Esophagus muscularis mucosa (tissue), 4 donors: ENCODE measurements at regions of chr19 and their contacts with region 1.

Region 1: DNA sequence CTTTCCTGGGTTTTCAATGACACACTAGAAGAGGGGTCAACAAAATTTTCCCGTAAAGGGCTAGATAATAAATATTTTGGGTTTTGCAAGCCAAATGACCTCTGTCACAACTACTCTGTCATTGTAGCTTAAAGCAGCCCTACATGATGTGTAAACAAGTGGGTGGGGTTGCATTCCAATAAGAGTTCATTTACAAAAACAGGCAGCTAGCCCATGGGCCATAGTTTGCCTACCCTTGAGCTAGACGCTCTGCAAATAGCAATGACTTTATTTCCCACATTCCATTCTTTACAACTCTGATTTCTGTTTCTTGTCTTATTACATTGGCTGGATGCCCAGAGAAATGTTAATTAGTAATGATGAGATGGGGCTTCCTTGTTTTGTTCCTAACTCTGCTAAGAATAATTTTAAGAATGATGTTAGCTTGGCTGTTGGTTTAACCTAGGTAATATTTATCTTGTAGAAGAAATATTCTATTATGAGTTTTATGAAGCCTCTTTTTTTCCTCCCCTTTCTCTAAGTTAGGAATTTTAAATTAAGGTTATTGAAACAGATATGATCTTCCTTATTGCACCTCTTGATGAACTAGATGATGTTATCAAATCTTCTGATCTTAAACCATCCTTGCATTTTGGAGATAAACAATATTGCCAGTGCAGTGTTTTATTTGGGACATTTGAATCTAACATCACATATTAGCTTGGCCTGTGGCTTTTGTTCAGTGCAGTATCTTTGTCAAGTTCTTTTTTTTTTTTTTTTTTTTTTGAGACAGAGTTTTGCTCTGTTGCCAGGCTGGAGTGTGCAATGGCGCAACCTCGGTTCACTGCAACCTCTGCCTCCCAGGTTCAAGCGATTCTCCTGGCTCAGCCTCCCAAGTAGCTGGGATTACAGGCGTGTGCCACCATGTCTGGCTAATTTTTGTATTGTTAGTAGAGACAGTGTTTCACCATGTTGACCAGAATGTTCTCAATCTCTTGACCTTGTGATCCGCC is 76.3 kb downstream of the ZNF557 start:
- DNase-seq: no peak
- H3K4me3 ChIP-seq: no peak overlapping the region
- H3K27ac ChIP-seq: no peak overlapping the region
- H3K4me1 ChIP-seq: peaks cover 0 to 4% (median 0%) of the 10 kb centered on the region in 4 donors
- H3K27me3 ChIP-seq: no peaks in the 10 kb centered on the region
- CTCF ChIP-seq: no peak
- EP300 ChIP-seq: no peak
- POLR2A ChIP-seq: no peak

Region 2: GRCh38 chr19:7104747-7105447 is 40.9 kb before region 1 on chr19:
- intact Hi-C with region 1: no loop called
- DNase-seq: no peak
- H3K4me3 ChIP-seq: no peak overlapping the region
- H3K27ac ChIP-seq: no peak overlapping the region
- H3K4me1 ChIP-seq: peaks cover under 1 to 6% (median under 1%) of the 10 kb centered on the region in 4 donors
- H3K27me3 ChIP-seq: peaks cover 0 to 7% (median 0%) of the 10 kb centered on the region in 4 donors
- CTCF ChIP-seq: no peak
- EP300 ChIP-seq: no peak
- POLR2A ChIP-seq: no peak

Region 3: DNA sequence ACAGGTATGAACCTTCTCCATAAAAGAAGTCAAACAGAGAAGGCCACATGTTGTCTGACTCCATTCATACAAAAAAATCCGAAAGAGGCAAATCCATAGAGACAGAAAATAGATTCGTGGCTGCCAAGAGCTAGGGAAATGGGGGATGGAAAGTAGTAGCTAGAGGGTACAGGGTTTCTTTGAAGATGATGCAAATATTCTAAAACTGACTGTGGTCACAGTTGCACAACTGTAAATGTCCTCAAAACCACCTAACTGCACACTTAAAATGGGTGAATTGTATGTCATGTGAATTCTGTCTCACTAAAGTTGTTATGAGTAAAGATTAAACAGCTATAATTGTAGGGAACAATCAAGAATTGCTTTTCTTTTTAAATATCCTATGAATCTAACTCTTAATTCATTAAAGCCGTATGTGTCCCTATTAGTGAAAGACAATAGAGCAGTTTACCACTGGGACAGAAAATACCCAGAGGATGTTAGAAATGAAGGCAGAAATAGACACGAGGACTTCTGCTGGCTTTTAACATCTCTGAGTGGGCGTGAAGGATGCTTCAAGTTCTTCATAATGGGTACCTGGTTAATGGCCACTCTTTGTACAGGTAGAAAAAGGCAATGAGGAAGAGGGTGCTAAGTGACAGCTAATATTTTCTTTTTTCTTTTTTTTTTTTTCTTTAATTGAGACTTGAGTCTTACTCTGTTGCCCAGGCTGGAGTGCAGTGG is 127.2 kb after region 1 on chr19:
- intact Hi-C with region 1: no loop called
- DNase-seq: no peak
- H3K4me3 ChIP-seq: no peak overlapping the region
- H3K27ac ChIP-seq: no peak overlapping the region
- H3K4me1 ChIP-seq: peaks cover 0 to 15% (median 5%) of the 10 kb centered on the region in 4 donors
- H3K27me3 ChIP-seq: no peaks in the 10 kb centered on the region
- CTCF ChIP-seq: no peak
- EP300 ChIP-seq: no peak
- POLR2A ChIP-seq: no peak

Region 4: DNA sequence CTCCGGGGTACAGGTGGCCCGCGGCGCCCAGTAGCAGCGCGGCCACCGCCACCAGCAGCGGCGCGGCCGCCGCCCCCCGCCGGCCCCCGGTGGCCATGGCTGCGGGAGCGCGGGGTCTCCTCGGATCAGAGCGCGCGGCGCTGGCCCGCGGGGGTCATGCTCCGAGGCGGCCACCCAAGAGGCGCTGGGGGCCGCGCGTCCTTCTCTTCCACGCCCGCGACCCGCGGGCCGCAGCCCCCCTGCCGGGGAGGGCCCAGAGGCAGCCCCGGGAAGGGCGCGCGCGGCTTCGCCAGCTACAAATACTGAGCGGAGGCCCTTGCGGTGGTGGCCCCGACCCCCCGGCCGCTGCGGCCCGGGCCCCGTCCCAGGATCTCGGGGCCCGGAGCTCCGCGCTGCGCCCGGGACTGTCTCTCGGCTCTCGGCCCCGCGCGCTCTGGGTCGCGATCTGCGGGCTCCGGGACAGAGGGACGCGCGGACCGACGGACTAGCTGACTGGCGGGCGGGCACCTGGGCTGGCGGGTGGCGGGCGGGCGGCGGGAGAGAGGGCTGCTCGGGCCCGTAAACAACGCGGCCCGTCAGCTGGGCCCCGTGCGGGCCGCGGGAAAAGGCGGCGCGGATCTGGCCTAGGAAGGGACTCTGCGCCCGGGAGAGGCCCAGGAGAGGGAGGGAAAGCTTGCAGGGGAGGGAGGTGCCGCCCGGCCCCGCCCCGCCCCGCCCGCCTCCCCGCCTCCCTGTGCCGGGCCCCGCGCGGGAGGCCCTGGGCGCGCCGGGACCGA is 148.2 kb after region 1 on chr19 and contains the start of gene INSR:
- intact Hi-C with region 1: loop called (anchors 5 kb)
- DNase-seq: peak; percentile 95
- H3K4me3 ChIP-seq: peak within 1 kb of the TSS; percentile 83 to 100 (median 100)
- H3K27ac ChIP-seq: peak within 1 kb of the TSS; percentile 90 to 94 (median 94)
- H3K4me1 ChIP-seq: peaks cover 18 to 55% (median 35%) of the 10 kb centered on the region in 4 donors
- H3K27me3 ChIP-seq: peaks cover 0 to 3% (median 0%) of the 10 kb centered on the region in 4 donors
- CTCF ChIP-seq: no peak
- EP300 ChIP-seq: no peak
- POLR2A ChIP-seq: peak; percentile 50
- total RNA-seq, gene INSR: 72.3 to 143 (median 92.5) TPM

Region 5: GRCh38 chr19:7340959-7341837 is 195.4 kb after region 1 on chr19:
- intact Hi-C with region 1: loop called (anchors 1 kb)
- DNase-seq: peak; percentile 97
- H3K4me3 ChIP-seq: no peak overlapping the region
- H3K27ac ChIP-seq: no peak overlapping the region
- H3K4me1 ChIP-seq: peaks cover 0 to 12% (median 6%) of the 10 kb centered on the region in 4 donors
- H3K27me3 ChIP-seq: peaks cover 0 to 3% (median 0%) of the 10 kb centered on the region in 4 donors
- CTCF ChIP-seq: peak; percentile 94 to 96 (median 95)
- EP300 ChIP-seq: no peak
- POLR2A ChIP-seq: no peak